Heart left ventricle (tissue), 16 donors: ENCODE measurements at regions of chr15 and their contacts with region 1.

Region 1: DNA sequence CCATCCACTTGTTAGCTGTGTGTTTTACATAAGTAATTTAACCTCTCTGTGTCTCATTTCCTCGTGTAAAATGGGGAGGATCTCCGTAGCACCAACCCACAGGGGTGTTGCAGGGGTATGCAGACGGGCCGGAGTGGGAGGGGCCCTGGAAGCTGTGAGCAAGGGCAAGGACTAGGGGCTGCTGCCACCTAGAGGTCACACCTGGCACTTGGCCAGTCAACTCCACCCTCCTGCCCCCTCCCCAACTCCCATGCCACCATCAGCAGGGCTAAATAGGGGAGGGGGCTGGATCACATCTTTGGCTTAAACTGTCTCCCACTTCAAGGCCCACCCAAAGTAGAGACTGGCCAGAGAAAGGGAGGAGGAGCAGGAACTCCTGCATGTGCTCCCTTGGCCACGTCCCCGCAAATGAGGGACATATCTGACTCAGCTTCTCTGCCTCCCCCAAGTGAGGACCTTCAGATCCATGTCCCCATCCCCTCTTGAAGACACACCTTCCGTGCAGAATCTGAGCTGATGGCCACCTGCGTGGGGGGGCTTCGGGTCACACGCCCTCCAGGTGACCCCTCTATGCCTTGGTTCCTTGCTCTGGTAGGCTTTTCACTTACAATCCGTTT is 2.6 kb downstream of the CCDC9B start:
- DNase-seq: peak; percentile 82 to 89 (median 85)
- ATAC-seq: peak; percentile 13 to 28 (median 22)
- H3K4me3 ChIP-seq: peak overlapping the region in 9 of 12 donors; percentile 1 to 57 (median 49)
- H3K27ac ChIP-seq: peak overlapping the region in 11 of 12 donors; percentile 94 to 100 (median 97)
- H3K4me1 ChIP-seq: peaks cover 30 to 98% (median 90%) of the 10 kb centered on the region in 12 donors
- H3K27me3 ChIP-seq: no peaks in the 10 kb centered on the region
- CTCF ChIP-seq: peak; percentile 57 to 87 (median 75)
- POLR2A ChIP-seq: no peak

Region 2: GRCh38 chr15:40323239-40323952 is 14.8 kb before region 1 on chr15 and contains the start of gene INAFM2:
- intact Hi-C with region 1: loop called in 6 of 10 experiments (anchors 1 to 2 kb)
- DNase-seq: peak; percentile 92 to 96 (median 95)
- ATAC-seq: peak; percentile 81 to 91 (median 87)
- H3K4me3 ChIP-seq: peak within 1 kb of the TSS; percentile 72 to 94 (median 82)
- H3K27ac ChIP-seq: peak within 1 kb of the TSS; percentile 69 to 99 (median 90)
- H3K4me1 ChIP-seq: peaks cover under 1 to 59% (median 41%) of the 10 kb centered on the region in 12 donors
- H3K27me3 ChIP-seq: no peaks in the 10 kb centered on the region
- CTCF ChIP-seq: peak; percentile 62 to 88 (median 75)
- POLR2A ChIP-seq: no peak
- total RNA-seq, gene INAFM2: 28.6 to 92.7 (median 40.1) TPM